ENCODE measurements at regions of chr3 and their contacts with region 1.

Region 1: DNA sequence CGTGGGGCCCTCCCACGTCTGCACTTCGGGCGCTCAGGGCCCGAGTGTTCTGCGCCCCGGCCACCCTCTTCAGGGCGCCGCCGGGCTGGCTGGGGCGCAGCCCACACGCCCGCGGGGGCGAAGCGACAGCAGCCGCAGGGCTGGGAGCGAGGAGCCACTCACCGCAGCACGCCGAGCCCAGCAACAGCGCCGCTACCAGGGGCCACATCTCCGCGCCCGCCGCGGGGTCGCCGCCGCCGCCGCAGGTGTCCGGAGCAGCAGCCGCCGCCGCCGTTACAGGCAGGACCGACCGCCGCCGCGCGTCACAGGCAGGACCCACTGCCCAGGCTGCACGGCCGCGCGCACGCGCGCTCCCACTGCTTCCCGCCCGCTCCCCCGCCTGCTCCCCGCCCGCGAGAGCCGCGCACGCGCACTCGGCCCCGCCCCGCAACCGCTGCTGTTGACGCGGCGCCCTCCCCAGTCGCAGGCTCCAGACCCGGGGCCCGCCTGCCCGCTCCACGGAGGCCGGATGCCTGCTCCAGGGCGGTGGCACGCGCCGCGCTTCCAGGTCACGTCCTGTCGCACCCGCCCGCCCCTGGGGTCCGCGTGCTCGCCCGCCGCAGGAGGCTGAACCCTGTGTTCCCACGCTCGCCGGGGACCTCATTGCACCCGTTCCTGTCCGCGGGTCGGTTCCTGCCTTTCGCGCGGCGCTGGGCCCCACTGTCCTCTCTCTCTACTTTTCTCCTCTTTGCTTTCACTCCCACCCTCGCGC is at the start of gene CD47:
- DNase-seq: peak; percentile 94
- H3K4me3 ChIP-seq: peak within 1 kb of the TSS; percentile 82 to 93 (median 90)
- H3K27ac ChIP-seq: peak within 1 kb of the TSS; percentile 51
- H3K4me1 ChIP-seq: peaks cover 12% of the 10 kb centered on the region
- H3K27me3 ChIP-seq: peaks cover 2 to 6% of the 10 kb centered on the region in 2 experiments
- CTCF ChIP-seq: no peak
- POLR2A ChIP-seq: peak; percentile 74
- total RNA-seq, gene CD47: 30.3 and 32.2 TPM in 2 replicates

Region 2: DNA sequence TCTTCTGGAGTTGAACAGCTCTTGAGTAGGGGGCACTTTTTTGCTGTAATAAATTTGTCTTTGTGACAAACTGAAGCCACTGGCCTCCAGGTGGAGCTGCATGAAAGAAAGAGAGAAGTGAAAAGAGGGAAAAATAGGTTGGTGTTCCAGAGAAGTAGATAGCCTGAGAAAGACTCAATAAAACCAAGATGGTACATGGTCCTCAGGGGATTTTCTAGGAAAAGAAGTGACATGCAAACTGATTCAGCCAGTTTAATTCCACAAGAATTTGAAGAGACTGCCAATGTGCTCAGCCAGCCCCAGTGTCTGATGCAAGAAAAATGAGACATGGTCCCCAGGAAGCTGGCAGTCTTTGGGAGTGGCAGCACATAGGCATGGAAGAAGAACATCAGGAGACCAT is 152.7 kb before region 1 on chr3:
- CTCF ChIA-PET with region 1: interaction called, 11 read pairs
- POLR2A ChIA-PET with region 1: no interaction called
- dilution Hi-C with region 1: no loop called
- intact Hi-C with region 1: loop called (anchors 1 kb)
- DNase-seq: peak; percentile 70
- H3K4me3 ChIP-seq: no peak overlapping the region
- H3K27ac ChIP-seq: no peak overlapping the region
- H3K4me1 ChIP-seq: peaks cover 13% of the 10 kb centered on the region
- H3K27me3 ChIP-seq: no peaks in the 10 kb centered on the region
- CTCF ChIP-seq: peak; percentile 28 to 55
- POLR2A ChIP-seq: no peak

Region 3: DNA sequence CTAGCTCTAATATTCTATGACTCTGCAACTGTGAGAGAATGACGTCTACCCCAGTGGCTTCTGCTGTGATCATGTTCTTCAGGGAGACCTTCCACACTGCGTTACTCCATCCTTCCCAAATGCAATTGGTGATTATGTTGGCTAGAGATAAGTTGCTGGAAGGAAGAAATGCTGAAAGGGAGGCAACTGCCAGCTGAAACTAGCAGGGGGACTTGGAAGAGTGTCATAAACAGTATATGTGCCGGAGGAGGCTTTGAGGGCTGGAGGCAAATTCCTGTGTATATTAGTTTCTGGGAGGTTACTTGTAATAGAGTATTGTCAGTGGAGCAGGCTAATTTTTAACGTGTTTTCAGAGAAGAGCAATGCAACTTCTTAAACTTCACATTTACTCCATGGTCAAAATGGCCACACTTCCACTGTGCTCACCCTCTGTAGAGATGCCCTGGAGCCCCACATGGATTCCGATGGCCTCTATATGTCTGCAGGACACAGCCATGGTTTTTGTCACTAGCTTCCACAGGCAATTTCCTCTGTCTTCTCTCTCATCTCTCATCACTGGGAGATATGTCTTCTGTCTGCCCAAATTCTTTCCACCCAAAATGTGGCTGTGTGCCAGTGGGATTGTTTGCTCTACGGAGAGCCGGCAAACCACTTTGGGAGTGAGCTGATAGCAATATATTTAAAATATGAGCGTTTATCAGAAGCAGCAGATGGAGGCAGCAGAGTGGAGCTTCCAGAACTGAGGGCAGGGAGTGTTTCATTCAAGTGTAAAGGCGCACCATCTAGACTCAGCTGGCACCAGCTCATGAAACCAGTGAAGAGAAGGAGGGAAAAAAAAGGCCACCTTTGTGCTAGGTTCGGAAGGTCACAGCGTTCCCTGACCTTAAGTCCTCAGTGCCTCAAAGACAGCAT is 13.3 kb after region 1 on chr3:
- CTCF ChIA-PET with region 1: interaction called, 12 read pairs
- POLR2A ChIA-PET with region 1: no interaction called
- dilution Hi-C with region 1: no loop called
- intact Hi-C with region 1: no loop called
- DNase-seq: peak; percentile 19
- H3K4me3 ChIP-seq: no peak overlapping the region
- H3K27ac ChIP-seq: no peak overlapping the region
- H3K4me1 ChIP-seq: no peaks in the 10 kb centered on the region
- H3K27me3 ChIP-seq: no peaks in the 10 kb centered on the region
- CTCF ChIP-seq: no peak
- POLR2A ChIP-seq: no peak

Region 4: DNA sequence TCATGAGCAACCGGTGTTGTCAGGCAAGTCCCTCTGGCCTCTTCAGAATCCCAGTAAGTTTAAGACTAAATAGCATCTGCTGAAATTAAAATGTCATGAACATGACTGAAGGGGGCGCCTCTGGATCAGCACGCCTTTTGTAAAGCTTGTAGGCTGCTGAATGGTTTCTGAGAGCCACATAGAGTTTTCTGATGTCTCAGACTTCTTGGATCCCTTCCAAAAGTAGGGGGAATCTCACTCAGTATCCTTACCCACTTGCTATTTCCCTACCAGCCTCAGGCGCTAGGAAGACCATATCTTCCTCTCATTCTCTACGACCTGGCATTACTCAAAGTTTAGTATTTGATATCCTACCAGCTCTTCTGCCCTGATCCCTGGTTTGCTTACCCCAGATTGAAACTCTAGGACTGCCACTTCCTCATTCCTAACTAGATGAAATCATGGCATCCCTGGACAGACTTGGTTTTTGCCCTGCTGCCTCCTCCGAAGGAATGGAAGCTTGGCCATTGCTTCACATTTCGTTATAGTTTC is 62.6 kb after region 1 on chr3:
- CTCF ChIA-PET with region 1: no interaction called
- POLR2A ChIA-PET with region 1: no interaction called
- dilution Hi-C with region 1: no loop called
- intact Hi-C with region 1: loop called (anchors 2 kb)
- DNase-seq: peak; percentile 43
- H3K4me3 ChIP-seq: no peak overlapping the region
- H3K27ac ChIP-seq: no peak overlapping the region
- H3K4me1 ChIP-seq: peaks cover 10% of the 10 kb centered on the region
- H3K27me3 ChIP-seq: no peaks in the 10 kb centered on the region
- CTCF ChIP-seq: peak; percentile 18 to 30
- POLR2A ChIP-seq: no peak

Region 5: GRCh38 chr3:108342837-108343478 is 252.1 kb after region 1 on chr3:
- CTCF ChIA-PET with region 1: no interaction called
- POLR2A ChIA-PET with region 1: no interaction called
- dilution Hi-C with region 1: no loop called
- intact Hi-C with region 1: loop called (anchors 2 kb)
- DNase-seq: peak; percentile 70
- H3K4me3 ChIP-seq: no peak overlapping the region
- H3K27ac ChIP-seq: peak overlapping the region; percentile 36
- H3K4me1 ChIP-seq: peaks cover 15% of the 10 kb centered on the region
- H3K27me3 ChIP-seq: no peaks in the 10 kb centered on the region
- CTCF ChIP-seq: no peak
- POLR2A ChIP-seq: no peak

Region 6: DNA sequence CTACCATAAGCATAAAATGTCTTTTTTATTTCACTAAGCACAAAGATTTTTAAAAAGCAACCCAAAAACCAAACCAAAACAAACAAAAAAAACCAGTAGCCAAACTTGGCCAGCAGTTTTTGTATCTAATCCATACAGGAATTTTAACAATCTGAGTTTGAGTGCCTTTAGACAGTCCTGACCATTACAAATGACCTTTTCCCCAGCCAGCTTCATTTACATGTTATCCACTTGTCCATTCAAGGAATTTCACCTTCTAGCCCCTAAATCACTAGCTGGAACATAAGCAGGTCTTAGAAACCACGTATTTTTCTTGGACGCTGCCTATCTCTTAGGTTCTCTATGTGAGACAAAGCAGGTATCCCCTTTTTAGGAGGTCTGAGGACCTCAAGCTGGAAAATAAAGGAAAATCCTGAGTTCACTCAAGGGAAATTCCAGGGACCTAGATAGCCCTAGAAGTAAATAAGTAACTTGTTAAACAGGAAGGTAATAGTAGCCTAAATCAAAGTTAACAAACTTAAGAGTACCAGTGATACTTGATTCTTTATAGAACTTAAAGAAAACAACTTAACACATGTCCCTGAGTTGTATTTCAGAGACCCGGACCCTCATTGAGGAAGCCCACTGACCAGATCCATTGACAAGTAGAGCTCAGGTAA is 464.2 kb after region 1 on chr3:
- CTCF ChIA-PET with region 1: no interaction called
- POLR2A ChIA-PET with region 1: no interaction called
- dilution Hi-C with region 1: no loop called
- intact Hi-C with region 1: no loop called
- DNase-seq: no peak
- H3K4me3 ChIP-seq: no peak overlapping the region
- H3K27ac ChIP-seq: no peak overlapping the region
- H3K4me1 ChIP-seq: no peaks in the 10 kb centered on the region
- H3K27me3 ChIP-seq: no peaks in the 10 kb centered on the region
- CTCF ChIP-seq: no peak
- POLR2A ChIP-seq: no peak

Measured in endothelial cell of umbilical vein (primary cell).